Adrenal gland (tissue), 19 donors: ENCODE measurements at regions of chr12 and their contacts with region 1.

Region 1: DNA sequence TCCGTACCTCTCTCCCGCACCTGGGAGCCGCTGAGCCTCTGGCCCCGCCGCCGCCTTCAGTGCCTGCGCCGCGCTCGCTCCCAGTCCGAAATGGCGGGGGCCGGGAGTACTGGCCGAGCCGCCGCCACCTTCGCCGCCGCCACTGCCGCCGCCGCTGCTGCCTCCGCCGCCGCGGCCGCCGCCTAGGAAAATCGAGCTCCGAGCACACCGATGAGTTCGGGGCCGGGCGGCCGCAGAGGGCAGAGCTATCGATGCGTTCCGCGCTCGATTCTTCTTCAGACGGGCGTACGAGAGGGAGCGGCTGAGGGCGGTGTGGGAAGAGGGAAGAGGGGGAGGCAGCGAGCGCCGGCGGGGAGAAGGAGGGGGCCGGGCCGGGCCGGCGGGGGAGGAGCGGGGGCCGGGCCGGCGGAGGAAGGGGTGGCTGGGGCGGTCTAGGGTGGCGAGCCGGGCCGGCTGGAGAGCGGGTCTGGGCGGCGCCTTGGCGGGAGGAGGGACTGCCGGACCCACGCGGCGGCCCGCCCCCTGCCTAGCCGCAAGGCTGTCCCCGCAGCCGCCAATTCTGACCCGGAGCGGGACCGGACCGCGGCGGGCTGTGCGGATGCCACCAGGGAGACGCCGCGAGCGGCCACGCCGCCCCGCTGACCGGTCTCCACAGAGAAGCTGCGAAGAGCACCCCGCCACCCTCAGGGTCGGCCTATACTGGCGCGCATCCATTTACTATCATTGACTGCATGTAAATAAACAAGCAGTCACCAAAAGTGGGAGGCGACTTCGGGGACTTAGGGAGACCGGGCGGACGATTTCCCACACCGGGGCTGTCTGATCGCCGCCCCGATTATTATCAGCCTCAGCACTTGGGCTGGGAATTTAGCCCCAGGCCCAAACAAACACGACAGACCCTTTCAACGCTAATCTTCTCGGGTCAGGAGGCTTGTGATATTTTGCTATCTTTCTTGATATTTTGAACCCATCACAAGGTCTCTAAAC is at the start of gene KRAS:
- DNase-seq: peak; percentile 97 to 98 (median 97)
- H3K4me3 ChIP-seq: peak within 1 kb of the TSS; percentile 26 to 95 (median 64)
- H3K27ac ChIP-seq: peak within 1 kb of the TSS; percentile 34 to 99 (median 95)
- H3K4me1 ChIP-seq: peaks cover 0 to 12% of the 10 kb centered on the region in 2 donors
- H3K27me3 ChIP-seq: no peaks in the 10 kb centered on the region
- CTCF ChIP-seq: peak in 2 of 6 experiments; percentile 2 to 8
- POLR2A ChIP-seq: peak; percentile 81 to 90
- total RNA-seq, gene KRAS: 7.0 to 21.3 (median 12.6) TPM

Region 2: GRCh38 chr12:25384038-25384892 is 133.2 kb after region 1 on chr12:
- intact Hi-C with region 1: loop called in 1 of 2 experiments (anchors 5 kb)
- DNase-seq: no peak
- H3K4me3 ChIP-seq: no peak overlapping the region
- H3K27ac ChIP-seq: peak overlapping the region in 4 of 5 donors; percentile 95 to 100 (median 97)
- H3K4me1 ChIP-seq: peaks cover 4 to 6% of the 10 kb centered on the region in 2 donors
- H3K27me3 ChIP-seq: no peaks in the 10 kb centered on the region
- CTCF ChIP-seq: no peak
- POLR2A ChIP-seq: no peak

Region 3: GRCh38 chr12:25598956-25599355 is 347.9 kb after region 1 on chr12:
- intact Hi-C with region 1: no loop called
- DNase-seq: no peak
- H3K4me3 ChIP-seq: no peak overlapping the region
- H3K27ac ChIP-seq: no peak overlapping the region
- H3K4me1 ChIP-seq: no peaks in the 10 kb centered on the region
- H3K27me3 ChIP-seq: no peaks in the 10 kb centered on the region
- CTCF ChIP-seq: no peak
- POLR2A ChIP-seq: no peak